Activated CD4-positive, alpha-beta memory T cell treated with anti-CD3 and anti-CD28 coated beads, Interleukin-2, amount 10 ng/mL, durations not matched to agents 7 days and 5 days (primary cell): ENCODE measurements at regions of chr5 and their contacts with region 1.

Region 1: DNA sequence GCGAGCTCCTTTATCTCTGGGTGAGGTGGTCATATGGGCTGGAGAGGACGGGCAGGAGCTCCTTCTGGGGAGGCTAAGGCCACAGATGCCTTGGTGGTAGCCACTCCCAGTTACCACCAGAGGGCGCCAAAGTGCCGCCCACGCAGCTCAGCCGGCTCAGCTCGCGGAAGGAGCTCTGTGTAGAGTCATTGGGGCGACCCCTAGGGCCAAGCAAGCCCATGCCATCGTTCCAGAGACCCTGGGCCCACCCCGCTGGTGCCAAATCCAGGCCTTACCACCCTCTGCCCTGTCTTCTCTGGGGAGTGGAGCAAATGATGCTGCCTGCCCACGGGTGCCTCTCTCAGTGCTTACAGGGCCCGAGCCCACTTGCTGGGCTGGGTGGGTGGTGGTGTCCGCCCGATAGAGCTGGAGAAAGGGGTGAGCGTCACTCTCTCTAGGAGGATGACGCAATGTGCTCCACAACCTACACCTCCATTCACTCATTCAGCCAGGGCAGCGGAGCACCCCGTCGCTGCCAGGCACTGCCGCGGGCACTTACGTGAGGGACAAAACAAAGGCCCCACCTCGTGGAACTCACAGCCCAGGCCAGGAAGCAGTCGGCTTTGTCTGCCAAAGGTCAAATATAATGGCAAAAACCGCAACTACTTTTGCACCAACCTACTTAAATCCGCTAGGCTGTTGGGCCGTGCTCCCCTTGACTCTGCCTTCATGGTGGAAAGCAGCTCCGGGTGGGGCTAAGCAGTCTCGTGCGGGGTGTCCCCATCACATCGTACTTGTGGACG is 13.8 kb downstream of the TSPAN17 start:
- DNase-seq: peak; percentile 77
- H3K4me3 Mint-ChIP-seq: no peak overlapping the region
- H3K27ac Mint-ChIP-seq: no peak overlapping the region
- H3K4me1 Mint-ChIP-seq: peaks cover 29% of the 10 kb centered on the region
- H3K27me3 Mint-ChIP-seq: peaks cover 7% of the 10 kb centered on the region

Region 2: DNA sequence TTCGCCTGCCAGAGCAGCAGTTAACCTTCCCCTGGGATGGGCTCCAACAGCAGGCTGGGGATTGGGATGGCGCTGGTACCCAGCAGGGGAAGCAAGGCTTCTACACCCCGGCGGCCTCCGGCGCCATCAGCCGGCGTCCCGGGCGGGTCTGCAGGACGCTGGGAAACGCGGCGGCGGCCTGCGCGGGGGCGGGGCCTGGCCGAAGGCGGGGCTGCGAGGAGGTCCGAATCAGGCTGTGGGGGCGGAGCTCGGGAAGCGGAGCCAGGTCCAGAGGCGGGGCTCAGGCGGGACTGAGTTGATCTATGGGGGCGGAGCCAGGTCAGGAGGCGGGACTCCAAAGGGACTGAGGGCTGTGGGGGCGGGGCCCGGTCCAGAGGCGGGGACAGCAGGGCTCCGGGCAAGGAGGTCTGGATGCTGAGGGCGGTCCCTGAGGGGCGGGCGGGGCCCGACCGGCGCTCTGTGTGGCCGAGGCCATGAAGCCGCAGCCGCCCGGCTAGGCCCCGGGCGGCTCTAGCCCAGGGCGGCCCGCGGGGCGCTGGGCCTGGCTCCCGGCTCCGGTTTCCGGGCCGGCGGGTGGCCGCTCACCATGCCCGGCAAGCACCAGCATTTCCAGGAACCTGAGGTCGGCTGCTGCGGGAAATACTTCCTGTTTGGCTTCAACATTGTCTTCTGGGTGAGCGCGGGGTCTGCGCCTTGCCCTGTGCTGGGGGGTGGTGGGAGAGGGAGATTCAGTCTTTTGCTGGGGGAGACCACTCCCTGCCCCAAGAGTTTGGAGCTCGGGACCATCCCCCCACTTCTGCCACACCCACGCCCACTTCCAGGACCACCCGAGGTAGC is 13.8 kb before region 1 on chr5 and contains the start of gene TSPAN17:
- CTCF ChIA-PET with region 1: interaction called, 81 read pairs
- POLR2A ChIA-PET with region 1: interaction called, 14 read pairs
- DNase-seq: peak; percentile 100
- H3K4me3 Mint-ChIP-seq: peak within 1 kb of the TSS; percentile 83
- H3K27ac Mint-ChIP-seq: peak within 1 kb of the TSS; percentile 76
- H3K4me1 Mint-ChIP-seq: peaks cover 49% of the 10 kb centered on the region
- H3K27me3 Mint-ChIP-seq: no peaks in the 10 kb centered on the region
- total RNA-seq, gene TSPAN17: 33.3 to 33.4 TPM

Region 3: GRCh38 chr5:176744584-176744965 is 83.5 kb after region 1 on chr5:
- CTCF ChIA-PET with region 1: interaction called, 13 read pairs
- POLR2A ChIA-PET with region 1: no interaction called
- DNase-seq: no peak
- H3K4me3 Mint-ChIP-seq: no peak overlapping the region
- H3K27ac Mint-ChIP-seq: no peak overlapping the region
- H3K4me1 Mint-ChIP-seq: peaks cover 16% of the 10 kb centered on the region
- H3K27me3 Mint-ChIP-seq: peaks cover 62% of the 10 kb centered on the region

Region 4: DNA sequence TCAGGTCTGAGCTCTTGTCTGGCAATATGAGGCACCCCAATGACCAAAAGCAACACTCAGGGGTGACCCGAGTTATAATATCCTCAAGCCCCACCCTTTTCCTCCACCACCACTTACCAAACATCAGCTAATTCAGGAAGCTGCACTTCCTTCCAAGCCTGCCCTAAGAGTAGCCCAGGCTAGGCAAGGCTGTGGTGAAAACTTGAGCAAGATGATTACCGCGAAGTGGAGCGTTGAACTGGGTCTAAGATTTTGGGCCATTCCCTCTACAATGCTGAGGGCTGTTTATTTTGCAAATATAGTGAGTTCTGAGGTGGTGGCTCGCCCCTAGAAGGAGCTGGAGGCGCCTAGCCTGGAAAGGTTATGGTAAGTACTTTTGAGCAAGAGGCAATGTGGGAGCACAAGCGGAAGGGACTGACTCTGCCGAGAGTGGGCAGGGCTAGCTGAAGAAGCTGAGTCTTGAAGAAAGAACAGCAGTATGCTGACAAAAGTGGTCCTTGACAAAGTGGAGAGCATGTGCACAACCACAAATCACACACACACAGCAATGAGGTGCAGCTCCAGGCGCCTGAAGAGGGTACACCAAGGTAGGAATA is 238.3 kb after region 1 on chr5 and contains the start of gene HK3:
- CTCF ChIA-PET with region 1: interaction called, 11 read pairs
- POLR2A ChIA-PET with region 1: no interaction called
- DNase-seq: no peak
- H3K4me3 Mint-ChIP-seq: no peak within 1 kb of the TSS
- H3K27ac Mint-ChIP-seq: peak within 1 kb of the TSS; percentile 34
- H3K4me1 Mint-ChIP-seq: peaks cover 31% of the 10 kb centered on the region
- H3K27me3 Mint-ChIP-seq: no peaks in the 10 kb centered on the region
- total RNA-seq, gene HK3: 0.33 TPM in 1 of 2 experiments, not detected in the other

Region 5: GRCh38 chr5:176959051-176959450 is 298.0 kb after region 1 on chr5:
- CTCF ChIA-PET with region 1: interaction called, 32 read pairs
- POLR2A ChIA-PET with region 1: no interaction called
- DNase-seq: no peak
- H3K4me3 Mint-ChIP-seq: no peak overlapping the region
- H3K27ac Mint-ChIP-seq: no peak overlapping the region
- H3K4me1 Mint-ChIP-seq: peaks cover 2% of the 10 kb centered on the region
- H3K27me3 Mint-ChIP-seq: no peaks in the 10 kb centered on the region

Region 6: DNA sequence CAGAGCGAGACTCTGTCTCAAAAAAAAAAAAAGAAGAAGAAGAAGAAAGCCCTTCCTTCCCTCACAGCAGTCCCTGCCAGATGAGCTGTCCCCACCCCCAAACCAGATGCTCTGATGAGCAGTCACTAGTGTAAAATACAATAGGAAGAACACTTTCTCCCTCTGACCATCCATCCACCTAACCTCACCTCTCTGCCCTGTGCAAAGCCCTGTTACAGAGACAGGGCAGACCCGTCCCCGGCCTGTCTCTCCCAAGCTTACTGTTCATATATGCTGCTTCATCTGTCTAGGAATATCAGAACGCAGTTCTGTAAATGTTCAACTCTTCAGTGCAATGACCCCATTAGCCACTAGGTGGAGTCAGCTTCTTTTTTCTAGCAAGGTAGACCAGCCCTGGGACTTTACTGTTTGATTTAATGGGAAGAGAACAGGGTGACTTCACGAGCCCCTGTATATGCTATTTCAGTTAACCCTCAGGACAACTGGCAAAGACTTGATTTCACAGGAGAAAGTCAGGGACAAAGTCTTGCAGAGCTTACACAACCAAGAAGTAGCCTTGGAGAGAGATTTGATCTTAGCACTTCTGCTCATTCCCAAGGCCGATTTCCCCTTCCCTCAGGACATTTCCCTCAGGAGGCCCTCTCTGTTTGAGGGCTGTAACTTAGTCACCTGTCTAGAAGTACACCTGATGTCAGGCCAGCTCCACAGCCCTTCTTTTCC is 410.8 kb after region 1 on chr5:
- CTCF ChIA-PET with region 1: interaction called, 10 read pairs
- POLR2A ChIA-PET with region 1: no interaction called
- DNase-seq: peak; percentile 66
- H3K4me3 Mint-ChIP-seq: no peak overlapping the region
- H3K27ac Mint-ChIP-seq: no peak overlapping the region
- H3K4me1 Mint-ChIP-seq: peaks cover 3% of the 10 kb centered on the region
- H3K27me3 Mint-ChIP-seq: no peaks in the 10 kb centered on the region